ENCODE measurements at regions of chr1 and their contacts with region 1.

Region 1: DNA sequence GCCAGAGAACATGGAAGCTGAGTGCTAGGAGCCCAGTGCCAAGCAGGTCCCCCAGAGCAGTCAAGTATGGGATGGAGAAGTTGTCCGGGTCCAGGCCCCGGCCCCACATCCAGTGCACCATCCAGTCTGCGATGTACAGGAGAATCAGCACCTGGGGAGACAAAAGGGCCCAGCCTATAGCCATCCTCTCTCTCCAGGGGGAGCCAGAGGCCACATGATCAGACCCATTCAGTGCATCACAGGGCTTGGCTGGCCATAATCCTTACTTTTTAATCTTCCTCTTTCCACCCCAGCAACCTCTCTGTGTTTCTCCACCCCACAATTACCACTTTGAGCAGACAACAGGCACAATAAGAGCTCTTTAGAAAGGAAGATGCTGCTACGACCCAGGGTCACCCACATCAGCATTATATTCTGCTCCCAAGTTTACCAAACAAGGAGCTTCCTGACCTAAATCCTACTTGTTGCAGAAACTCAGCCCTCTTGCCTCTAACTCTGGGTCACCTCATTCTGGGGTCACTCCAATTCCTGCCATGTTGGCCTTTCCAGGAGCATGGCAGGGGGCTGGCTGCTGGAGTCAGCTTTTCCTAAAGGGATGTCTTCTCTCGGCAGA is 16.4 kb upstream of the RAB29 start:
- DNase-seq: peak; percentile 50 to 75 (median 66)
- H3K4me3 ChIP-seq: no peak overlapping the region
- H3K27ac ChIP-seq: no peak overlapping the region
- H3K4me1 ChIP-seq: no peaks in the 10 kb centered on the region
- H3K27me3 ChIP-seq: no peaks in the 10 kb centered on the region

Region 2: GRCh38 chr1:205805082-205805712 is 13.5 kb after region 1 on chr1:
- CTCF ChIA-PET with region 1: interaction called, 23 read pairs
- POLR2A ChIA-PET with region 1: no interaction called
- DNase-seq: peak in 1 of 3 donors; percentile 9
- H3K4me3 ChIP-seq: no peak overlapping the region
- H3K27ac ChIP-seq: no peak overlapping the region
- H3K4me1 ChIP-seq: peaks cover 0 to 8% (median 0%) of the 10 kb centered on the region in 4 experiments
- H3K27me3 ChIP-seq: no peaks in the 10 kb centered on the region

Region 3: DNA sequence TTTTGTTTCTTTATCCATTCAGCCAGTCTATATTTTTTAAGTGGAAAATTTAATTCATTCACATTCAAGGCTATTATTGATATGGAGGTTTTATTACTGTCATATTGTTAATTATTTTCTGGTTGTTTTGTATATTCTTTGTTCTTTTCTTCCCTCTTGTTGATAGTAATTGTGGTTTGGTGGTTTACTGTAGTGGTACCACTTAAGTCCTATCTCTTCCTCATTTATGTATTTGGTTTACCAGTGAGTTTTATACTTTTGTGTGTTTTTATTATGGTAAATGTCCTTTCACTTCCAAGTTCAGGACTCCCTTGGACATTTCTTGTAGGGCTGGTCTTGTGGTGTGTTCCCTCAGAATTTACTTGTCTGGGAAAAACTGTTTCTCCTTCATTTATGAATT is 86.4 kb after region 1 on chr1:
- CTCF ChIA-PET with region 1: no interaction called
- POLR2A ChIA-PET with region 1: no interaction called
- DNase-seq: peak; percentile 23 to 70 (median 60)
- H3K4me3 ChIP-seq: no peak overlapping the region
- H3K27ac ChIP-seq: no peak overlapping the region
- H3K4me1 ChIP-seq: no peaks in the 10 kb centered on the region
- H3K27me3 ChIP-seq: peaks cover 0 to 23% (median 3%) of the 10 kb centered on the region in 5 experiments

Region 4: DNA sequence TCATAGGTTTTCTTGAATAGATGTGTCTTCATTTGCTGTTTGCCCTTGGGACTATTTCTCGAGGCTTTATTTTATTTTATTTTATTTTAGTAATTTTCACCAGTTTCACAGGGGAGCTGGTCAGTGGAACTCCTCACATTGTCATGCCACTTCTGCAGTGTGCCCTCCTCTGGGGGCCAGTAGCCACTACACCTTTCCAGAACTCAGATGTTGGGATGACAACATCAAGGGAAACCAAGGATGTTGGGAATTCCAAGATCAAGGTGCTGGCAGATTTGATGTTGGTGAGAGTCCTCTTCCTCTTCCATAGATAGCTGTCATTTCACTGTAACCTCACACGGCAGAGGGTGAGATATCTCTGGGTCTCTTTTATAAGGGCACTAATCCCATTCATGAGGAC is 116.1 kb after region 1 on chr1:
- CTCF ChIA-PET with region 1: interaction called, 18 read pairs
- POLR2A ChIA-PET with region 1: no interaction called
- DNase-seq: no peak
- H3K4me3 ChIP-seq: no peak overlapping the region
- H3K27ac ChIP-seq: no peak overlapping the region
- H3K4me1 ChIP-seq: no peaks in the 10 kb centered on the region
- H3K27me3 ChIP-seq: peaks cover 0 to 8% (median 0%) of the 10 kb centered on the region in 5 experiments

Region 5: DNA sequence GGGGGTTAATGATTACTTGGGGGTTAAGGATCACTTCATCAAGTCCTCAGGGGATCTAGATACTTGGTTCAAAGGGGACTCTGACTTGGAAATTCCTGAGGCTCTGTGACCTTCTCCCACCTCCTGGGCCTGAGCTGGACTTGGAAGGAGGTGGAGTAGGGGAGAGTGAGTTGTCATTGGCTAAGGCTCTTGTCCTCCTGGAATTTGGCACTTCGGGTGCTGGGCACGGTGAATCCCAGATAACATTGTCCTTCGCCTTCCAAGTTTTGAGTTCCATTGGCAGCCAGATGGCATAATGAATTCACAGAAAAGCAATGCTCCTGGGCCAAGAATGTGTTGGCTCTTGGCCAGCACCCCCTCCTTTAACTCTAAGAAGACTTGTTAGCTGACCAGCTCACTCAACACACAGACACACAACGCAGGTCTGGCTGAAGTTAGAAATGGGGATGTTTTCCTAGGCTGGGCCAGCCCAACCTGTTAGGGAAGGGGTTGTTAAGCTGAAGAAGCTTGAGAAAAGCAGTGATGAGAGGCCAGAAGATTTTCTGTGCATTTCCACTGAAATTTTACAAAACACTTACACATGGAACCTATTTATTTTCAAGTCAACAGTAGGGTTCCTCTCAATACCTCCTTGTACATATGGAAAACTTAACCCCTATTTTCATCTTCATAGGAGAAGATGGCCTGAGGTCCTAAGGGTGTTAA is 121.9 kb after region 1 on chr1:
- CTCF ChIA-PET with region 1: interaction called, 27 read pairs
- POLR2A ChIA-PET with region 1: no interaction called
- DNase-seq: no peak
- H3K4me3 ChIP-seq: no peak overlapping the region
- H3K27ac ChIP-seq: no peak overlapping the region
- H3K4me1 ChIP-seq: peaks cover 0 to 9% (median 6%) of the 10 kb centered on the region in 4 experiments
- H3K27me3 ChIP-seq: peaks cover 0 to 6% (median 0%) of the 10 kb centered on the region in 5 experiments

Region 6: GRCh38 chr1:205919026-205919746 is 127.5 kb after region 1 on chr1:
- CTCF ChIA-PET with region 1: interaction called, 27 read pairs
- POLR2A ChIA-PET with region 1: no interaction called
- DNase-seq: peak; percentile 68 to 82 (median 74)
- H3K4me3 ChIP-seq: no peak overlapping the region
- H3K27ac ChIP-seq: no peak overlapping the region
- H3K4me1 ChIP-seq: peaks cover 0 to 12% (median 6%) of the 10 kb centered on the region in 4 experiments
- H3K27me3 ChIP-seq: no peaks in the 10 kb centered on the region

Region 7: DNA sequence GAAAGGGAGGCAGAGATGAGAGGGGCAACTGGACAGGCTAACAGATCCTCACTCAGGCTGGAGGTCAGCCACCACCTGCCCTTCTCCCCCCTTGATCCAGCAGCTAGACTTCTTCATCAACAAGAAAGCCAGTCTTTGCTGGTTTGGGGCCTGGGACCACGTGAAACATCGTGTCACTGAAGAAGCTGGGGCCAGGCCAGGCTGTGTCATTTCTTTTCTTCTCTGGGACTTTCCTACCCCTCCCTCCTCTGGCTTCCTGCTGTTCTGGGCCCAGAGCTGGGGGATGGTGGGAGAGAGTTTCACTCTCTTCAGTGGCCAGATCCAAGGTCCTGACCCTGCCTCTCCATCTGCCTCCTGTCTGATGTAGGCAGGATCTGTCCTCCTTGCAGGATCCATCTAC is 169.7 kb after region 1 on chr1:
- CTCF ChIA-PET with region 1: interaction called, 13 read pairs
- POLR2A ChIA-PET with region 1: no interaction called
- DNase-seq: peak; percentile 14 to 76 (median 73)
- H3K4me3 ChIP-seq: no peak overlapping the region
- H3K27ac ChIP-seq: no peak overlapping the region
- H3K4me1 ChIP-seq: peaks cover 0 to 21% (median 7%) of the 10 kb centered on the region in 4 experiments
- H3K27me3 ChIP-seq: peaks cover 0 to 2% (median 0%) of the 10 kb centered on the region in 5 experiments

Measured in common myeloid progenitor, CD34-positive (primary cell).